Esophagus squamous epithelium (tissue), 5 donors: ENCODE measurements at regions of chr11 and their contacts with region 1.

Region 1: GRCh38 chr11:108117746-108118371 is 3.5 kb upstream of the ACAT1 start:
- DNase-seq: no peak
- H3K4me3 ChIP-seq: no peak overlapping the region
- H3K27ac ChIP-seq: no peak overlapping the region
- H3K4me1 ChIP-seq: peaks cover 11 to 38% (median 15%) of the 10 kb centered on the region in 3 donors
- H3K27me3 ChIP-seq: no peaks in the 10 kb centered on the region
- CTCF ChIP-seq: peak; percentile 13 to 60 (median 44)
- POLR2A ChIP-seq: no peak

Region 2: GRCh38 chr11:108237058-108237481 is 119.2 kb after region 1 on chr11:
- intact Hi-C with region 1: no loop called
- DNase-seq: no peak
- H3K4me3 ChIP-seq: no peak overlapping the region
- H3K27ac ChIP-seq: no peak overlapping the region
- H3K4me1 ChIP-seq: peaks cover 0 to 6% (median 0%) of the 10 kb centered on the region in 3 donors
- H3K27me3 ChIP-seq: no peaks in the 10 kb centered on the region
- CTCF ChIP-seq: no peak
- POLR2A ChIP-seq: no peak

Region 3: DNA sequence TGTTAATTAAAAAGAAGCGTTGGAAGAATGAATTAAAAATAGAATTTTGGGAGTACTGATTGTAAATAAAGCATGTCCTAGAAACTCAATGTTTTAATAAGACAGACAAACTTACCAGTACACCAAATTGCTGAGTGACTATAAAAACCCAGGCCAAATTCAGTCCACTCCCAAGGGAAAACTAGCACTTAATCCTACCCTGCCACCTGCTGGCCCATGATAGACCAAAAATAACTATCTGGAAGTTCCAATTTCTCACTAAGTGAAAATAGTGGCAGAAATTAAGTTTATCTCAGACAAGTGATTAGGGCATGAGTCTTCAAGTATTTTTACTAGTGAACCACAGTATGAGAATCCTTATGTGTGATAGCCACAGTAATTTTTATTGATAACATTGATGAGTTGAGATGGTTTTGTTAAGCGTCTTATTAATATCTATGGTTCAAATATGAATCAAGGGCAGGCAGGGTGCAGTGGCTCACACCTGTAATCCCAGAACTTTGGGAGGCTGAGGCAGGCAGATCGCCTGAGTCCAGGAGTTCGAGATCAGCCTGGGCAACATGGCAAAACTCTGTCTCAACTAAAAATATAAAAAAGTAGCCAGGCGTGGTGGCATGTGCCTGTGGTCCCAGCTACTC is 537.3 kb after region 1 on chr11:
- intact Hi-C with region 1: loop called (anchors 10 kb)
- DNase-seq: no peak
- H3K4me3 ChIP-seq: no peak overlapping the region
- H3K27ac ChIP-seq: no peak overlapping the region
- H3K4me1 ChIP-seq: no peaks in the 10 kb centered on the region
- H3K27me3 ChIP-seq: no peaks in the 10 kb centered on the region
- CTCF ChIP-seq: peak in 5 of 6 experiments; percentile 52 to 76 (median 64)
- POLR2A ChIP-seq: no peak